ENCODE measurements at regions of chr6 and their contacts with region 1.

Region 1: GRCh38 chr6:37705239-37706051 is 7.8 kb upstream of the MDGA1 start:
- DNase-seq: peak; percentile 67 to 91 (median 82)

Region 2: DNA sequence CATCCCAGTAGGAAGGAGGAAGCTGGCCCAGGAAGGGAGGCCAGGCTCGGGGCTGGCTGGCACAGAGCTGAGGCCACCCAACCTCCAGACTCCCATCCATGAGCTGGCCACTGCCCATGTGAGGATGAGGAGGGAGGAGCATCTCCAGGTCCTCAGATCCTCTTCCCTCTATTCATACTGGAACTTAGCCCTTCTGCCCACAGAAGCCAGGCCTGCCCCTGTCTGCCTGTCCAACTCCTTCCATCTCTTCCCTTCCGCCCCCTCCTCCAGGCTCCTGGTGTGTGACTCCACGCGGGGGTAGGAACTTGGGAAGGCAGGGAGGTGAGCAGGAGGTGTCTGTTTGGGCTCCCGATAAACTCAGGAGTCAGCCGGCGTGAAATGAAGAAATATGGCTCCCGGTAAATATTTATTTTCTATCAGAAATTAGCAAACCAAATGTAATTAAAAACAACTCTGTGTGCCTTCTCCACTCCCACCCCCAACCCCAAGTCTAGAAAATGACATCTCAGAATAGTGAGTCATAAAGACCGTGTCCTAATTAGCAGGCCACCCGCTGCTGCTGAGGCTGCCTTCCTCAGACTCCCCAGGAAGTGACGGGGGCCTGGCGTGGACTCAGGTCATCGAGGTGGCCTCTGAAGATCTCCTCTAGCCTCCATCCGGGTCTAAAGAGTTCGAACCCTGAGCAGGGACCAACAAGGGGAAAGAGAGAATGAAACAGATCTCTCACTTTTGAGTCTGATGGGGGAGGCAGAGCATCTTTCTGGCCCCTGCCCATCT is 89.7 kb before region 1 on chr6:
- intact Hi-C with region 1: no loop called
- DNase-seq: peak in 23 of 42 donors; percentile 13 to 60 (median 36)

Region 3: GRCh38 chr6:37783856-37784584 is 78.6 kb after region 1 on chr6:
- intact Hi-C with region 1: loop called (anchors 10 kb)
- DNase-seq: peak in 40 of 42 donors; percentile 13 to 78 (median 42)

Region 4: DNA sequence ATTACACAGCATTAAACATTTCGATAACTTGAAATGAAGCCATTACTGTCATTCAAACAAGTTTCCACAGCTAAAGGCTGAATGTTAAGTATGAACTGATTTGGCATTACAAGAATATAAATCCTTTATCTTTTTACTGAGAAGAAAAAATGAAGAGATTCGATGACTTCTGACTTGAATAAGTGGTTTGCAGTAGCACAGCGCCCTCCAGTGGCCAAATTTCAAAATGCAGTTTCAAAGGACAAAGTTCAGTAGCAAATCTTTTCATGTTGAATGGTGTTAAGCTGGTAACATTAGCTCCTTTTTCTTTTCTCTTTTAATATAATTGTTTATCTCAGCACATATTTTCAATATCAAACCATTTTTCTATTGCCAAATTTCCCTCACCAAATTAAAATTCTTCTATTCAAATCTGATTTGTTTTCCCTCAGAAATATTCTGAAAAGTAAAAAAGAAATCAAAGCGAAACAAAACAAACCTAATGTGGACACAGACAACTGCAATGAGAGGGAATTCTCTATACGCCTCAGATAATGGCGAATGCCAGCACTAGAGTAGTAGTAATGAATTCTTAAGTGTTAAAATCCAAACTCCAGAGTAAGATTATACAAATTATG is 788.6 kb after region 1 on chr6:
- intact Hi-C with region 1: loop called (anchors 10 kb)
- DNase-seq: peak; percentile 23 to 97 (median 88)